ENCODE measurements at regions of chr7 and their contacts with region 1.

Region 1: DNA sequence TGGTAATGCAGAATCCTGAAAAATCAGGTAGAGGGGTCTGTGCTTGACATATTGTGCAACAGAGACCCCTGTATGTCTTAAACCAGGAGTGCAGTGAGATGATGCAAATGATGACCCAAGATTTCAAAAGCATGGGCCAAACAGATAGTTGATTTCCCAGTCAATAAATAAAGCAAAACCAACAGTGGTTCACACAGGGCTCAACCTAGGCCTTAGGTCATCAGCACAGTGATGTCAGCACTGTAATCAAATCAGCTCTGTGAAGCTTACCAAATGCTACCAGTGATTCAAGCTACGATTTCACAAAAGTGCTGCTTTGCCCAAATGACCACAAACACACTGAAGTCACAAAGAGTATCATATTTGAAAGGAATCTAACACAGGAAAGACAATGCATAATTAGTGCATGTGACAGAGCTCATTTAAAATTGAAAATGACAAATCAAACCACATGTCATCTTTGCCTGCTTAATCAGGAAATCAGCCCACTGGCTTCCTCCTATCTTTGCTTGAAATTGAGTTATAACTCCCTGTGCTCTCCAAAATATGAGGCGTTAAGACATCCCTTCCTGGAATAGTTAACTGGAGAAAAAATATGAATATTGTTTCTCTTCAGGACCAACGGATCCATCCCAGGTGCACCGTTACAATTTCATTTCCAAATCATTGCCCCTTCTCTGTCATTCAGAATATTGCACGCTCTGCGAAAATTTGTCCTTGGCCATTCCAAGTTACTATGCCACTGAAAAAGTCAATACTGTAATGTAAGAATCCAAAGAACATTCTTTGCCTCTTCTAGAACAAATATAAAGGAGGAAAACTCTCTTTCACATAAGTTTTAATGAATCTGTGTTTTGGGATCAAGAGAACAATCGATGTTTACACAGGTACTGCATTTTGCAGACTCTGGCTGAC is 41.9 kb upstream of the ASL start:
- DNase-seq: no peak
- ATAC-seq: peak; percentile 71
- H3K4me3 ChIP-seq: no peak overlapping the region
- H3K27ac ChIP-seq: no peak overlapping the region
- H3K4me1 ChIP-seq: no peaks in the 10 kb centered on the region
- H3K27me3 ChIP-seq: no peaks in the 10 kb centered on the region
- CTCF ChIP-seq: no peak
- EP300 ChIP-seq: no peak
- POLR2A ChIP-seq: no peak
- RAD21 ChIP-seq: no peak

Region 2: GRCh38 chr7:66070222-66070621 is 36.5 kb after region 1 on chr7:
- CTCF ChIA-PET with region 1: interaction called, 10 read pairs
- POLR2A ChIA-PET with region 1: no interaction called
- RAD21 ChIA-PET with region 1: interaction called, 31 read pairs
- SMC1A ChIA-PET with region 1: interaction called, 8 read pairs
- in situ Hi-C with region 1: no loop called
- intact Hi-C with region 1: no loop called
- DNase-seq: no peak
- ATAC-seq: no peak
- H3K4me3 ChIP-seq: no peak overlapping the region
- H3K27ac ChIP-seq: no peak overlapping the region
- H3K4me1 ChIP-seq: no peaks in the 10 kb centered on the region
- H3K27me3 ChIP-seq: no peaks in the 10 kb centered on the region; a peak in 1 of 4 replicates
- CTCF ChIP-seq: no peak
- EP300 ChIP-seq: no peak
- POLR2A ChIP-seq: no peak
- RAD21 ChIP-seq: no peak

Region 3: DNA sequence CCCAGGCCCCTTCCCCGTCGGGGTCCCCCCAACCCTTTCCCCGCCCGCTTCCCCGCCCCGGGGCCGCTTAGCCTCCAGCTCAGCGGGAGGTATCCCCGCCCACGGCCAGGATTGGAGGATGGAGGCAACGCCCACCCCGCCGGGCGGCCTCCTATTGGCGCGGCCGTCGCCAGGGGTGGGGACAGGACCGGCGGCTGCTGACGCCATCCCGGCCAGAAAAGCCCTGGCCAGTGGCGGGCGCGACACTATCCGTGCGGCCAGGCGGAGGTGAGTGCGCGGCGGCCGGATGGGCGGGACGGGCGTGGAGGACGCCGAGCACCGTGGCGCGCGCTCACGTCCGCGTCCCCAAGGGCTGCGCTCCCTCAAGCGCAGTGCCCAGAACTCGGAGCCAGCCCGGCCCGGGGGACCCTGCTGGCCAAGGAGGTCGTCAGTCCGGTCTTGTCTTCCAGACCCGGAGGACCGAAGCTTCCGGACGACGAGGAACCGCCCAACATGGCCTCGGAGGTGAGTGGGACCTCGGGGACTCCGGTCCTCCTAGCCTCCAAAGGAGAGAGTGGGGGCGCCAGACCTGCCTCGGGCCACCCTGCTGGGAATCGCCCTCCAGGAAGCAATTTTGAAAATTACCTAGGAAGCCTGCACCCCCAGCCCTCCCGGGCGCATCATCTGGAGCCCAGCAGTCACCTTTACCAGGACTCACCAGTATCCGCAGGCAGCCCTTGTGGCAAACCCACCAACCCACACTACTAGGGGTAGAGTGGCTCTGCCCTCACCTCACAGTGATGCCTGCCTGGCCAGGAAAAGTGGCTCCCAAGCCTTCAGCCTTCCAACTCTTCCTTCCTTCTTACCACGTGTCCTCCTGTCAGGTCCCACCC is 42.1 kb after region 1 on chr7 and contains the start of gene ASL:
- CTCF ChIA-PET with region 1: interaction called, 10 read pairs
- POLR2A ChIA-PET with region 1: interaction called, 3 read pairs
- RAD21 ChIA-PET with region 1: interaction called, 31 read pairs
- SMC1A ChIA-PET with region 1: interaction called, 8 read pairs
- in situ Hi-C with region 1: no loop called
- intact Hi-C with region 1: no loop called
- DNase-seq: peak; percentile 66
- ATAC-seq: peak; percentile 99
- H3K4me3 ChIP-seq: peak within 1 kb of the TSS; percentile 84
- H3K27ac ChIP-seq: peak within 1 kb of the TSS; percentile 69; the same call in 1 of the 2 replicates
- H3K4me1 ChIP-seq: peaks cover 11% of the 10 kb centered on the region
- H3K27me3 ChIP-seq: no peaks in the 10 kb centered on the region
- CTCF ChIP-seq: no peak; a peak in 1 of 6 replicates
- EP300 ChIP-seq: no peak
- POLR2A ChIP-seq: peak; percentile 98
- RAD21 ChIP-seq: no peak
- polyA plus RNA-seq, gene ASL: 0.66 to 7.1 TPM

Region 4: DNA sequence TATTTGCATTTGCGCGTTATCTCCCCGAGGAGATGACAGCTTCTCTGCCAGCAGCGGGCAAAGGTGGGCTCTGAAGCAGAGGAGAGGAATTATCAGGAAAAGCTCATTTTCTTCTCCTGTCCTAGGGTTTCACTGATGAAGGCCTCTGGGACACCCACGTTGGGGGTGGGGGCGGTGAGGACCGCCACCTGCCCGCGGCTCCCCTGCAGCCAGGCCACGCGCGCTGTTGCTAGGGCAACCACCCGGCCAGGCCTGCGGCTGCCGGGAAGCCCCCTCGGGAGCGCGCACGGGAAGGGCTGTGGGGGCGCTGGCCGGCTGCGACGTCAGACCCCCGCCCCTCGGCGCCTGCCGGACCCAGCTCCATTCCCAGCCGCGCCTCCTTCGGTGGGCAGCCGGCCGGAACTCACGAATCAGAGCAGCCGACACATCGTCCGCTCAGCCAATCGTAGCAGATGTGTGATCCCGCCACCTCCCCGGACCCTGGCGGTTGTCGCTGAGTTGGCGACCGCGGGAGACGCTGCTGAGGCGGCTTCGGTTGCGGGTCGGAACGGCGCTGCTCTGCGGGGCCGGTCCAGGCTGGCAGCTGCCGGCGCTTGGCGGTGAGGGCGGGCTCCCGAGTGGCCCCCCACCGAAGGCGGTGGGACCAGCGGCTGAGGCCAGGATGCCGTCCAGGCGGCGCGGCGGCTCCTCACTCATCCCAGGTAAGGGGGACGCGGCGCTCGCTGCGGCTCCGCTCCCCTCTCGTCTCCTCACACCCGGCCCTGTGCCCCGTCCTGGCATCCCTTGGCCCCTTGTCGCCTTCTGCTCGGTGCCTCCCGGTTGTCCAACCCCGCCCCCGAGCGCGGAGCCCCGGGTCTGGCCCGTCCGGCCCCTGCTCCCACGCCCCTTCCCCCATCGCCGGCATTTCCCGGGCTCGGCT is 171.4 kb after region 1 on chr7 and contains the start of gene TPST1:
- CTCF ChIA-PET with region 1: no interaction called
- POLR2A ChIA-PET with region 1: no interaction called
- RAD21 ChIA-PET with region 1: interaction called, 5 read pairs
- SMC1A ChIA-PET with region 1: interaction called, 3 read pairs
- in situ Hi-C with region 1: no loop called
- intact Hi-C with region 1: loop called (anchors 10 kb)
- DNase-seq: peak; percentile 73
- ATAC-seq: peak; percentile 97
- H3K4me3 ChIP-seq: peak within 1 kb of the TSS; percentile 94
- H3K27ac ChIP-seq: peak within 1 kb of the TSS; percentile 55; the same call in 1 of the 2 replicates
- H3K4me1 ChIP-seq: peaks cover 6% of the 10 kb centered on the region; the same call in 1 of the 2 replicates
- H3K27me3 ChIP-seq: no peaks in the 10 kb centered on the region
- CTCF ChIP-seq: peak; percentile 57 to 64 (median 59)
- EP300 ChIP-seq: no peak
- POLR2A ChIP-seq: peak; percentile 97
- RAD21 ChIP-seq: peak; percentile 48; the same call in 1 of the 2 replicates
- polyA plus RNA-seq, gene TPST1: 1.1 to 2.2 TPM